ENCODE measurements at regions of chr12 and their contacts with region 1.

Region 1: GRCh38 chr12:126772171-126772864 is 1494.7 kb upstream of the TMEM132C start:
- DNase-seq: peak; percentile 67
- H3K4me3 Mint-ChIP-seq: peak overlapping the region; percentile 84
- H3K27ac Mint-ChIP-seq: peak overlapping the region; percentile 93
- H3K4me1 Mint-ChIP-seq: peaks cover 28% of the 10 kb centered on the region
- H3K27me3 Mint-ChIP-seq: no peaks in the 10 kb centered on the region

Region 2: GRCh38 chr12:126588586-126589249 is 183.6 kb before region 1 on chr12:
- CTCF ChIA-PET with region 1: interaction called, 3 read pairs
- POLR2A ChIA-PET with region 1: no interaction called
- intact Hi-C with region 1: loop called (anchors 1 kb)
- DNase-seq: peak; percentile 46
- H3K4me3 Mint-ChIP-seq: no peak overlapping the region
- H3K27ac Mint-ChIP-seq: peak overlapping the region; percentile 61
- H3K4me1 Mint-ChIP-seq: peaks cover 20% of the 10 kb centered on the region
- H3K27me3 Mint-ChIP-seq: no peaks in the 10 kb centered on the region

Region 3: DNA sequence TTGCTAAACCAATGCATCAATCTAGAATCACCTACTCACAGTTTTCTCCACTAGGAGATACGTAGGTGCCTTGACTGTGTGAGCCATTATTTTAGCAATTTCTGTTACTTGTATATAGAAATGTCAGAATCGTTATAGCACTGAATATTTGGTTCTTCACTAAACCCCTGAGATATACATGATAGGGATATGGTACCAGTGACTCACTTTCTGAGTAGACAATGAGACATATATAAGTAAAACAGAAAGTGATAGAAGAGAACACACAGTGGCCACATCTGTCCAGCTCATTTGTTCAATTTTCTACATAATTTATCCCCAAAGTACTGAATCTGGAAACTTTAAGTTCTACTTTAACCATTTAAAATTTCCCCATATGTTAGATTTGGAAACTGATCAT is 10.9 kb before region 1 on chr12:
- CTCF ChIA-PET with region 1: no interaction called
- POLR2A ChIA-PET with region 1: interaction called, 7 read pairs
- intact Hi-C with region 1: loop called (anchors 1 kb)
- DNase-seq: no peak
- H3K4me3 Mint-ChIP-seq: no peak overlapping the region
- H3K27ac Mint-ChIP-seq: peak overlapping the region; percentile 74
- H3K4me1 Mint-ChIP-seq: peaks cover 41% of the 10 kb centered on the region
- H3K27me3 Mint-ChIP-seq: no peaks in the 10 kb centered on the region

Region 4: DNA sequence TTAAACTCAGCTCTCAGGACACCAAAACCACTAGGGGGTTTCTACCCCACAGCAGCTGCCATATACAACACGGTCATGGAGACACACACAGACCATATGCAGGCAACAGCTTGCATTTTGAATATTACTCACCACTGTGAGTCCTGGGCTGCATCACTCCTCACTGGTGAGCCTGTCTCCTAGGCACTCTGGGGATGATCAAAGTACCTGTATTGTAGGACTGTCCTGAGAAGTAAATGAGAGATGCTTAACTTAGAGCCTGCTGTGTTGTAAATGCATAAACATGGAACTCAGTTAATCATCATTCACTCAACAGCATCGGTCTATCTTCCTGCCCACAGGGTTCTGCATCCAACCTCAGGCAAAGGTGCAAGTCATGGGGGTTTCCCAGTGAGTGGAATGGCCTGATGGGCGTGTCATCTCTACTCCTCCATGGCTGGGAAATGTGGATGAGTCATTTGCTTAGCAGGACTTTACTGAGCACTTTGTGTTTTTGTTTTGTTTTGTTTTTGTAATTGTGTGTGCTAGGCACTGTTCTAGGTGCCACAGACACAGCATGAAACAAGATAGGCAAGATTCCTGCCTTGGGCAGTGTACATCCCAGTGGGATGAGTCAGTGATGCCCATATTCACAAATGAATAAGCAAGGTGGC is 353.4 kb after region 1 on chr12:
- CTCF ChIA-PET with region 1: no interaction called
- POLR2A ChIA-PET with region 1: no interaction called
- intact Hi-C with region 1: loop called (anchors 1 kb)
- DNase-seq: peak; percentile 80
- H3K4me3 Mint-ChIP-seq: no peak overlapping the region
- H3K27ac Mint-ChIP-seq: peak overlapping the region; percentile 61
- H3K4me1 Mint-ChIP-seq: peaks cover 9% of the 10 kb centered on the region
- H3K27me3 Mint-ChIP-seq: peaks cover 16% of the 10 kb centered on the region

Region 5: DNA sequence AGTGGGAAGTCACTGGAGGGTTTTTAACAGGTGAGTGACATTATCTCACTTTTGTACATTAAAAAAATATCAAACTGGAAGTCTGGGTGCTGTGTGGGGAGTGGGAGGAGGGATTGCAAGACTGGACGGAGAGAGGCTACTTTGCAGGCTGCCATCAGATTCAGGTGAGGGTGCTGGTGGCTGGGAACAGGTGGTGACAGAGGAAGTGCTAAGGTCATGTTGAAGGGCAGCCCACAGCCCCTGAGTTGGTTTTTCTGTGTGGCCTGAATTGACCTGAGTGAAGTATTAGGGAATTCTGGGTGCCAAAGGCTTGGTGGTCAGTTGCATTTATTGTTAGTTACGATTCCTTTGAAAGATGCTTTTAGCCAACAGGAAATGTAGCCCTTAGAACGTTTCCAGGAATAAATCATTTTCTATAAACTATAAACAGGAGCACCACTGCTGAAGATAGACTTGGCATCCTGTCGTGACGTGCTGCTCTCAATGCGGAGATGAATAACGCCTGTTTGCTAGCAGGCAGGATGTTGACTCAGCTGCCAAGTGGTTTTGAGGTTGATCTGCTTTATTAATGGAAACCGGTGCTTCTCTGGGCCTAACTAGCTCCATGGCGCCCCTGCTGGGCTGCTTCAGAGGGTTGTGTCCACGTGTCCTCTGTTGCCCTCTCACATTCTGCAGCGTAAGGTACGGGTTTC is 787.2 kb after region 1 on chr12:
- CTCF ChIA-PET with region 1: no interaction called
- POLR2A ChIA-PET with region 1: no interaction called
- intact Hi-C with region 1: loop called (anchors 5 kb)
- DNase-seq: peak; percentile 89
- H3K4me3 Mint-ChIP-seq: no peak overlapping the region
- H3K27ac Mint-ChIP-seq: peak overlapping the region; percentile 85
- H3K4me1 Mint-ChIP-seq: peaks cover 22% of the 10 kb centered on the region
- H3K27me3 Mint-ChIP-seq: no peaks in the 10 kb centered on the region

Measured in activated CD4-positive, alpha-beta memory T cell treated with anti-CD3 and anti-CD28 coated beads for 36 hours (primary cell).